Calu3 (cell line): ENCODE measurements at regions of chr10 and their contacts with region 1.

Region 1: GRCh38 chr10:102132563-102133372 is at the start of gene PPRC1:
- DNase-seq: peak; percentile 94
- H3K4me3 Mint-ChIP-seq: peak within 1 kb of the TSS; percentile 98
- H3K27ac Mint-ChIP-seq: peak within 1 kb of the TSS; percentile 99
- H3K4me1 Mint-ChIP-seq: peaks cover 18% of the 10 kb centered on the region
- H3K27me3 Mint-ChIP-seq: no peaks in the 10 kb centered on the region
- CTCF ChIP-seq: peak; percentile 66
- total RNA-seq, gene PPRC1: 43.9 and 49.3 TPM in 2 replicates

Region 2: GRCh38 chr10:102151774-102152544 is 19.2 kb after region 1 on chr10 and contains the start of gene NOLC1:
- CTCF ChIA-PET with region 1: no interaction called
- intact Hi-C with region 1: loop called (anchors 2 kb)
- DNase-seq: peak; percentile 96
- H3K4me3 Mint-ChIP-seq: peak within 1 kb of the TSS; percentile 76
- H3K27ac Mint-ChIP-seq: peak within 1 kb of the TSS; percentile 74
- H3K4me1 Mint-ChIP-seq: peaks cover 19% of the 10 kb centered on the region
- H3K27me3 Mint-ChIP-seq: no peaks in the 10 kb centered on the region
- CTCF ChIP-seq: no peak
- total RNA-seq, gene NOLC1: 78.4 and 93.3 TPM in 2 replicates

Region 3: DNA sequence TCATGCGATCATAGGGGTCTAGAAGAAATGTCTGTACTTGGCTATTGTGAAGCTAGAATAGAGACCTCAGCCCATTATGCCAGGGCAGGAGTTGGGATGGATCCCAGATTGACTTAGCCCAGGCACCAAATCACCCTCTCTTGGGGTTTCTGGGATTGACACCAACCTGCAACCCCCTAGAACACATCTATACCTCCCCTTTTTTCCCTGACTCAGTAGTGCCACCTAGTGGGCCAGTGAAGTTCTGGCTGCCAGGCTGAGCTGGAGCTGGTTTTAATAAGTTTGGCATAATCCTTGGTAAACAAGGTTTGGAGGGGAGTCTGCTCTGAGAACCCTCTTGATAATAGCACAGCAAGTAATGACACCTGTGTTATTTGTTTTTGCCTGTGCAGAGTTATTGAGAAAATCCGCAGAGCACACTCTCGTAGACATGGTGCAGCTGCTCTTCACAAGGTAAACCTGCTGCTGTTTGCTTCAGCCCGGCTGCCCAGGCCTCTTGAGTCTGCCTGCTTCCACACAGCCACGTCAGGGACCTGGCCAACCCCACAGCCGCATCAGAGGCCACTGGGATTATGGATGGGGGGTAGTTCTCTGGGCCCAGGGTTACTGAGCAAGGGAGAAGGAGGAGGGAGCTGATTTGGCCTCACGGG is 219.4 kb after region 1 on chr10:
- CTCF ChIA-PET with region 1: no interaction called
- intact Hi-C with region 1: no loop called
- DNase-seq: peak; percentile 61
- H3K4me3 Mint-ChIP-seq: no peak overlapping the region
- H3K27ac Mint-ChIP-seq: no peak overlapping the region
- H3K4me1 Mint-ChIP-seq: peaks cover 6% of the 10 kb centered on the region
- H3K27me3 Mint-ChIP-seq: no peaks in the 10 kb centered on the region
- CTCF ChIP-seq: peak; percentile 78

Region 4: DNA sequence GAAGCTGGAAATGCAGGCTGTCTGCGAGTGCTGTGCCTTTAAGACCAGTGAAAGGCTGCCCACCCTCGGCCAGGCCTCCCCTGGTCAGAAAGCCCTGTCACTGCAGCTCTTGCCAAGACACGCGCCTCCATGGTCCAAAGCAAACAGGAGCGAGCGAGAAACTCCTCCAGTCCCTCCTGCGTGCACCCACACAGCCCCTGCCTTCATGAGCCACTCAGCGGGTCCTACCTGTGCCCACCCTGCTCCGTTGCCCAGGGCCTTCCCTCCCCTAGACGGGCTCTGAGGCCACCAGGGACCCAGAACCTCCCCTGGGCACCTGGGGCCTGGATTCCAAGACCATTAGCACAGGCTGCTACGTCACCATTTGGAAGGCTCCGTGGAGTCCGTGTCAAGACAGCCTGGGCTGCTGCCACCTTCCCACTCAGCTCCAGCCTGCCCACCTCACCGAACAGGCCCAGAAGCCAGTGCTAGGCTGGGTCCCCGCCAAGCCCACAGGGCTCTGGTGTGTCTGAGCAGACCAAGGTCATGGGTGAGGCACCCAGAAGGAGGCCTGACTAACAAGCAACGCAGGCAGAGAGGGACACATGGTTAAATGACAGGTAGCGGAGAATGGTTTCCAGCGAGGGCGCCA is 1505.3 kb after region 1 on chr10:
- CTCF ChIA-PET with region 1: no interaction called
- intact Hi-C with region 1: no loop called
- DNase-seq: no peak
- H3K4me3 Mint-ChIP-seq: no peak overlapping the region
- H3K27ac Mint-ChIP-seq: no peak overlapping the region
- H3K4me1 Mint-ChIP-seq: no peaks in the 10 kb centered on the region
- H3K27me3 Mint-ChIP-seq: no peaks in the 10 kb centered on the region
- CTCF ChIP-seq: no peak